Pancreas (tissue), 10 donors: ENCODE measurements at regions of chr1 and their contacts with region 1.

Region 1: GRCh38 chr1:15803354-15803753 is 4.1 kb downstream of the UQCRHL start:
- DNase-seq: peak in 1 of 6 donors; percentile 40
- ATAC-seq: no peak
- H3K4me3 ChIP-seq: no peak overlapping the region
- H3K27ac ChIP-seq: no peak overlapping the region
- H3K4me1 ChIP-seq: peaks cover 12 to 19% (median 12%) of the 10 kb centered on the region in 3 donors
- H3K27me3 ChIP-seq: no peaks in the 10 kb centered on the region
- CTCF ChIP-seq: peak in 2 of 4 donors; percentile 9 to 14

Region 2: GRCh38 chr1:15994590-15995351 is 191.4 kb after region 1 on chr1:
- intact Hi-C with region 1: loop called in 2 of 3 experiments (anchors 5 to 10 kb)
- DNase-seq: peak; percentile 51 to 79 (median 74)
- ATAC-seq: peak; percentile 84 to 95 (median 89)
- H3K4me3 ChIP-seq: no peak overlapping the region
- H3K27ac ChIP-seq: no peak overlapping the region
- H3K4me1 ChIP-seq: no peaks in the 10 kb centered on the region
- H3K27me3 ChIP-seq: no peaks in the 10 kb centered on the region
- CTCF ChIP-seq: peak; percentile 54 to 67 (median 60)

Region 3: DNA sequence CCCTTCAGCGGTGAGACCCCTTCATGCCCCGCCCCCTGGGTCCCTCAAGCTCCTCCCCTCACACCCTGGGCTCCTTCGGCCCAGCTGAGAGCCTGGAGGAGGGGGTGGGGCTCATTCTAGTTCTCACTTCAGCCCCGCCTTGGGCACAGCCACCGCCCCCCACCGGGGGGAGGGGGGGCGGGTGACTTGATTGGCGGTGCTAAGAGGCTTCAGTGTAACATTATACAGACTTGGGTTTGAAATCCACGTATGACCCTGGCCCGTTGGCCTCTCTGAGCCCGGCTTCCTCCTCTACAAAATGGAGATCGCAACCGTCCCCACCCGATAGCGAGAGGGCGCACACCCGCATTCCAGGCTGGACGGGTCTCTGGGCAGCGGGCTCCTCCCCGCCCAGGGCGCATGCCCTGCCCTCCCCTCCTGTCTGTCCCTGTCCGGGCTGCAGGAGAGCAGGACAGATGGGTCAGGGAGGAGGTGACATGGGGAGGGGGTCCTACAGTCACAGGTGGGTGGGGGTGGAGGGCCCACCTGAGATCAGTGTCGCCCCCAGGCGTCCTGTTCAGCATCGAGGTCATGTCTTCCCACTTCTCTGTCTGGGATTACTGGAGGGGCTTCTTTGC is 245.3 kb after region 1 on chr1:
- intact Hi-C with region 1: loop called in 1 of 3 experiments (anchors 10 kb)
- DNase-seq: peak in 4 of 6 donors; percentile 60 to 78 (median 67)
- ATAC-seq: peak; percentile 37 to 69 (median 48)
- H3K4me3 ChIP-seq: peak overlapping the region in 2 of 4 donors; percentile 30 to 36
- H3K27ac ChIP-seq: no peak overlapping the region
- H3K4me1 ChIP-seq: peaks cover 0 to 4% (median 3%) of the 10 kb centered on the region in 3 donors
- H3K27me3 ChIP-seq: no peaks in the 10 kb centered on the region
- CTCF ChIP-seq: no peak